ENCODE measurements at regions of chr11 and their contacts with region 1.

Region 1: DNA sequence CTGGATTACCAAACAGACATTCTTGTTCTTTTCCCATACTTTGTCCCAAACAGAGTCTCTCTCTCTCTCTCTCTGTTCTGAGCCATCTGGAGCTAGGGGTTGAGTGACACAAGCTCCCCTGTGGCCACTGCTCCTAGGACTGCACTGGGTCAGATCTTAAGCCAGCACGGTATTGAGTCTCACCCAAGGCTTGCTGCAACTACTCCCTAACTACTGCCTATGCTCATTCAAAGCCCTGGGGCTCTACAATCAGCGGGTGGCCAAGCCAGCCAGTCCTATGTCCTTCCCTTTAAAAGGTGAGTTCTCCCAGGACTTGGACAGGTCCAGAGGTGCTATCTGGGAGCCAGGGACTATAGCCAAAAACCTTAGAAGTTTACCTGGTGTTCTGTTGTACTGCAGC is 385.6 kb downstream of the CNTN5 start:
- DNase-seq: no peak
- ATAC-seq: no peak

Region 2: DNA sequence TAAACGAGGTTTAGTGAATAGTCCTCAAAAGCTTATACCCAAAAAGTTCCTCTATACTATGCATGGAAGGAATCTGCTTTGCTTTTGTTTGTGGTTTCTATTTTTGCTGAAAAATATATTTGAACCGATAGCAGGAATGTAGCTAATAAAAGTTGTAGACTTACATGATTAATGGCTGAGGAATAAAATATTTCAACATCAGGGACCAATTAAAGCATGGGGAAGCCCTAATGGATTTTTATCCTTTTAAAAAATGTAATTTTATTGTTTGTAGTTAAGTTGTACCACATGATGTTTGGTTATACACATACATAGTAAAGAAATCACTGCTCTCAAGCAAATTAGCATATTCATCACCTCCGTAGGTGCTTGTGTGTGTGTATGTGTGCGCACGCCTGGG is 680.9 kb before region 1 on chr11:
- intact Hi-C with region 1: no loop called
- DNase-seq: no peak
- ATAC-seq: no peak

Region 3: DNA sequence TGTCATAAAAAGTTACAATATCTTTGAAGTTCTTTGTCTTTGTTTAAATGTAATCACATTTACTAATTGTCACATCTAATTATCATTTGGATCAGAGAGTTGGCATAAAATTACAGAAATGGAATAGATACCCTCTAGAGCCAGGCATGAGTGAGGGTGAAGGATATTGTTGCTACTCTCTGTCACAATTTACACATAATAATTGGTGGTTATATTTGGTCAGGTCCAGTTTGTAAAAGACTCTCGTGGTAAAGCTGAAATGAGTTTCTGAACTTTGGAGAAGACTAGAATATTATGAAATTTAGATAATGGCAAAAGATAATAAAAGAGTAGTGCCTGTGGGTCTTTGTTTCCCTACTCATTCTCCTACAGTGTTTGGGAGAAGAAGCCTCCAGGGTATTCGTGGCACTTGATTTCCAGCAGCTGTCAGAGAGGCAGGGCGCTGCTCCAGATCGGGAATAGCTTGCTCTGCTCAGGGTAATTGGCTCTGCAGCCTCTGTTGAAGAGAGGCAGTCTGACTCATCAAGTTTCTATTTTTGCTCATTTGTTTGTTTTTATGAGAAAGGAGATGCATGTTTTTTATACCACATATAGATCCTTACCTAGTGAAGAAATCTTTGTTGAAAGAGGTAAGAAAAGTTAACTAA is 35.7 kb before region 1 on chr11:
- intact Hi-C with region 1: loop called (anchors 2 kb)
- DNase-seq: peak; percentile 79
- ATAC-seq: peak; percentile 93

Region 4: GRCh38 chr11:99766811-99767210 is 360.5 kb after region 1 on chr11:
- intact Hi-C with region 1: no loop called
- DNase-seq: no peak
- ATAC-seq: no peak